ENCODE measurements at regions of chr2 and their contacts with region 1.

Region 1: GRCh38 chr2:30711646-30712085 is 95.6 kb downstream of the CAPN13 start:
- DNase-seq: peak; percentile 72 to 85
- ATAC-seq: peak; percentile 85 to 90 (median 86)
- H3K4me3 ChIP-seq: no peak overlapping the region
- H3K27ac ChIP-seq: no peak overlapping the region
- H3K4me1 ChIP-seq: no peaks in the 10 kb centered on the region
- H3K27me3 ChIP-seq: no peaks in the 10 kb centered on the region
- CTCF ChIP-seq: peak; percentile 98

Region 2: DNA sequence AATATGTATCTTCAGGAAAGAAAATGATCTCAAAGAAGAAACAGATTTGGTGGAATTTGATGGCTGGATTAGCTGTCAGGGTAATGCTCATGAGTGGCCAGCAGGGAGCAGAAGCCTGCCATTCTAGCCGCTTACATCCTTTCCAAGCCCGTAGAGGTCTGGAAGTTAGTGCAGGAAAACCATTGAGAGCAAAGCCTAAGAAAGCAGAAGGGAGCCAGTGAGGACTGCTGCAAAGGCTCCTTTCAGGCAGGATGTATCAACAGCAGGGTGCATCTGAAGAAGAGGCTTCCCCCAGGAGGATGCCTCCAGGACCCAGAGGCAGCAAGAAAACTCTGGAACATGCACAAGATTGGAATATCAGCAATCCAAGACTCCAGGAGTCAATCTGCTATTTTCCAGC is 503.2 kb before region 1 on chr2:
- intact Hi-C with region 1: loop called (anchors 1 to 2 kb)
- DNase-seq: peak; percentile 51 to 63
- ATAC-seq: peak; percentile 81 to 96 (median 88)
- H3K4me3 ChIP-seq: no peak overlapping the region
- H3K27ac ChIP-seq: no peak overlapping the region
- H3K4me1 ChIP-seq: no peaks in the 10 kb centered on the region
- H3K27me3 ChIP-seq: peaks cover 0 to 2% (median 0%) of the 10 kb centered on the region in 3 donors
- CTCF ChIP-seq: peak; percentile 92

Region 3: DNA sequence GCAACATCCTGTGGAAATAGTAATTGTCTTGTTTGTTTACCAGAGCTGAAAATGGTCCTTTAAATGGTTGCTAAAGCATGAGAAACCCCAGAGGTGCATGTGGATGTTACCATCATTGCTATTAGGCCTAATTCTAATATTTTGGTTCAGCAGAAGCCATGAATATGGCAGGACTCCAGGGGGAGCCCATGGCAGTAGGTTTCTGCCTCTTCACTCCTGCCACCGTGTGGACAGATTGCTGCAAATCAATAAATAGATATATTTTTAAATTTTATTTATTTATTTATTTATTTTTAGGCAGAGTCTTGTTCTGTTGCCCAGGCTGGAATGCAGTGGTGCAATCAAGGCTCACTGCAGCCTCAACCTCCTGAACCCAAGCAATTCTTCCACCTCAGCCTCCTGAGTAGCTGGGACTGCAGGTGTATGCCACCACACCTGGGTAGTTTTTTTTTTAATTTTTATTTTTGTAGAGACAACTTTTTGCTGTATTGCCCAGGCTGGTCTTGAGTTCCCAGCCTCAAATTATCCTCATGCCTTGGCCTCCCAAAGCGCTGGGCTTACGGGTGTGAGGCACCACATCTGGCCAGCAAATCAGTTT is 150.5 kb after region 1 on chr2:
- intact Hi-C with region 1: loop called (anchors 5 to 10 kb)
- DNase-seq: peak in 1 of 2 donors; percentile 60
- ATAC-seq: no peak
- H3K4me3 ChIP-seq: no peak overlapping the region
- H3K27ac ChIP-seq: no peak overlapping the region
- H3K4me1 ChIP-seq: no peaks in the 10 kb centered on the region
- H3K27me3 ChIP-seq: no peaks in the 10 kb centered on the region
- CTCF ChIP-seq: peak; percentile 49

Region 4: GRCh38 chr2:31170071-31170698 is 458.5 kb after region 1 on chr2:
- intact Hi-C with region 1: loop called (anchors 1 to 2 kb)
- DNase-seq: peak; percentile 37 to 67
- ATAC-seq: peak; percentile 77 to 91 (median 88)
- H3K4me3 ChIP-seq: no peak overlapping the region
- H3K27ac ChIP-seq: no peak overlapping the region
- H3K4me1 ChIP-seq: no peaks in the 10 kb centered on the region
- H3K27me3 ChIP-seq: no peaks in the 10 kb centered on the region
- CTCF ChIP-seq: peak; percentile 91

Region 5: DNA sequence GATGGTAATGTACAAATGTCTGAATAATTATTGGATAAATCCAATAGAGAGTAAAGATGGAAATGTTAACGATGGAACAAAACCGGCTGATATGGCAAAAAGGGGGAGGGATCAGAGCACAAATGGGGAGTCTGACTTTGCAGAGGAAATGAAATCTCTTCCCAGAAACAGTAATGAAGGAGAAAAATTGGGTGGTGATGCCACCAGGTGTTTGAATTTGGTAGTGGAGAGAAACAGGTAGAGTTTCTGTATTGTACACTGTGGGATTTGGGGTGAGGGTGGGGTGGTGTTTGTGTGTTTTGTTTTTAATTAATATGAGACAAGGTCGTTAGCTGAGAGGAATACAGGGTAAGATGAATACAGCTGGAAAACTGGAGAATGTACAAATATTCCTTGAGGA is 723.2 kb after region 1 on chr2:
- intact Hi-C with region 1: loop called in 1 of 2 experiments (anchors 5 kb)
- DNase-seq: no peak
- ATAC-seq: peak in 2 of 4 donors; percentile 44 to 55
- H3K4me3 ChIP-seq: no peak overlapping the region
- H3K27ac ChIP-seq: no peak overlapping the region
- H3K4me1 ChIP-seq: no peaks in the 10 kb centered on the region
- H3K27me3 ChIP-seq: no peaks in the 10 kb centered on the region
- CTCF ChIP-seq: peak; percentile 43

Measured in psoas muscle (tissue), 8 donors.